Naive thymus-derived CD8-positive, alpha-beta T cell (primary cell): ENCODE measurements at regions of chr9 and their contacts with region 1.

Region 1: DNA sequence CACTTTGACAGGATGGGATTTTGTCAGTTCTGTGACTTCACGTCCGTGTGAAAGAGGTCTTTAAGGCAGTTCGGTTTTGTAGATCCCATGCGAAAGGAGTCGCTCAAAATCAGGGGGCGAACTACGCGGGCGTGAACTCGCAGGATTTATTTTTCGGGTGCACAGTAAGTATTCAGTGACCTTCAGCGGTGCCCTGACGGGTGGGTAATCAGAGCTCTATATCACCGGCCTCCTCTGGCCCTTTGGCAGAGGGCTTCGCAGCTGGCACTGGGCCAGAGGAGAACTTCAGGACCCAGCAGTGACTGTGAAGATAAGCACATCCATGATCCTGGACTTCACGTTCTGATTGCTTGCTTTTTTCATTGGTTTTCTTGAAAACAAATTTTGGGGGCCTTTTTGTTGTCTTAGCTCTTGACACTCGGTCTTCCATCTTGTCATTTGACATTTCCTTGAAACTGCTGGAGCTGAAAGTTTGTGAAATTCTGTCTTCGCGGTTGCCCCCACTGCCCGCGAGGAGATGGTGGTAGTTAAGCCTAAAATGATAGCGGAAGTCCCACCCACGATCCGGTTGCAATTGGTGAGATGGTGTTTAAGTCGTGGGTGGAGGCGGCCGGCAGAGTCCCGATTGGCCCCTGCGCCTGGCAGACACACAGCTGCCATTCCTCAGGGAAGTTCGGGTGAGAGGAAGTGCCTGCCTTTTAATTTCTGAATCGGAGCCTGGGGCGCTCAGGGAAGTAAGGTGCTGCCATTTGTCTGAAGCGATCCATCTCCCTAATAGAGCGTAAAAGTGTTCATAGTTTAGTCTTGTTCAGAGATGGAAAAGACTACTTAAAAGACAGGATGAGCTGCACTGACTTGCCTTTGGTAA is at the start of gene FAM120AOS:
- DNase-seq: peak; percentile 70 to 88 (median 80)
- ATAC-seq: peak; percentile 74 to 76
- H3K4me3 Mint-ChIP-seq: peak within 1 kb of the TSS; percentile 87 to 100 (median 96)
- H3K27ac Mint-ChIP-seq: peak within 1 kb of the TSS; percentile 83 to 99 (median 94)
- H3K4me1 Mint-ChIP-seq: peaks cover 33 to 64% (median 56%) of the 10 kb centered on the region in 4 donors
- H3K27me3 Mint-ChIP-seq: no peaks in the 10 kb centered on the region
- polyA plus RNA-seq, gene FAM120AOS: 49.3 to 59.7 (median 55.7) TPM

Region 2: DNA sequence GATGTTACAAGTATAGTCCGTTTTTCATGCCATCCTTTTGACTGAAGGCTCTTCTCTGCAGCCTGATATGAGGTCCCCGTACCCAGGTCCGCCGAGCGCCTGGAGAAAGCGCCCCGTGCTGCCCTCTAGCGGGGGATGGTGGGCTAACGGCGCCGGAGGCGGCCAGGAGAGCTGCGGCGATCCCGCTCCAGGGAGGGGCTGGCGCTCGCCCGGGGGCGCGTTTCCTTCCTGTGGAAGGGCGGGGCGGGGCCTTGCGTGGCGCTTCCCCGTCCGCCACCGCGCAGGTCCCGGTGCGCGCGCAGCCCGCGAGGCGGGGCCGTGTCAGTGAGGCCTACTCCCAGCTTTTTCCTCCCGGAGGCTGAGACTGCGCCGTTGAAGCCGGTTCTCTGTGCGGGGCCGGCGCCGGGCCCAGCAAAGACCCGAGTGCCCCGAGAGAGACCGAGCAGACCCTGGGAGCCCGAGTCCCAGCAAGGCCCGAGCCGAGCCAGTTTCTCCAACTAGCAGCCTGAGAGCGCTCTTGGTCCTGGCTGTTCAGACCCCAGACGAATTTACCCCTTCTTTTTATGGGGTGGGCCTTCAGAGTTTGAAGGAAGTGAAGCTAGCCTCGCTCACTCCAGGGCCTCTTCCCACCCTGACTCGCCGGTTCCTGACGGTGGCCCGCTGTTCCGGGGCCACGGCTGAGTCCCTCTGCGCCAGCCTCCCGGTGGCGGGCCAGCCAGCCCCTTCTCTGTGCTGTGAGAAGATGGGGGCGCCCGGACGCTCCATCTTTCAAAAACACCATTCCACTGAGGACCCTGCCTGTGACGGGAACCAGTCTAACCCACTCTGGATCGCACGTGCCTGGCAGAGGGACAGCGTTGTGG is 113.4 kb after region 1 on chr9:
- POLR2A ChIA-PET with region 1: interaction called, 15 read pairs
- DNase-seq: peak; percentile 96 to 100 (median 98)
- ATAC-seq: peak; percentile 90 to 96
- H3K4me3 Mint-ChIP-seq: peak overlapping the region; percentile 81 to 91 (median 88)
- H3K27ac Mint-ChIP-seq: peak overlapping the region; percentile 92 to 99 (median 96)
- H3K4me1 Mint-ChIP-seq: peaks cover 15 to 32% (median 16%) of the 10 kb centered on the region in 4 donors
- H3K27me3 Mint-ChIP-seq: no peaks in the 10 kb centered on the region